ENCODE measurements at regions of chr2 and their contacts with region 1.

Region 1: DNA sequence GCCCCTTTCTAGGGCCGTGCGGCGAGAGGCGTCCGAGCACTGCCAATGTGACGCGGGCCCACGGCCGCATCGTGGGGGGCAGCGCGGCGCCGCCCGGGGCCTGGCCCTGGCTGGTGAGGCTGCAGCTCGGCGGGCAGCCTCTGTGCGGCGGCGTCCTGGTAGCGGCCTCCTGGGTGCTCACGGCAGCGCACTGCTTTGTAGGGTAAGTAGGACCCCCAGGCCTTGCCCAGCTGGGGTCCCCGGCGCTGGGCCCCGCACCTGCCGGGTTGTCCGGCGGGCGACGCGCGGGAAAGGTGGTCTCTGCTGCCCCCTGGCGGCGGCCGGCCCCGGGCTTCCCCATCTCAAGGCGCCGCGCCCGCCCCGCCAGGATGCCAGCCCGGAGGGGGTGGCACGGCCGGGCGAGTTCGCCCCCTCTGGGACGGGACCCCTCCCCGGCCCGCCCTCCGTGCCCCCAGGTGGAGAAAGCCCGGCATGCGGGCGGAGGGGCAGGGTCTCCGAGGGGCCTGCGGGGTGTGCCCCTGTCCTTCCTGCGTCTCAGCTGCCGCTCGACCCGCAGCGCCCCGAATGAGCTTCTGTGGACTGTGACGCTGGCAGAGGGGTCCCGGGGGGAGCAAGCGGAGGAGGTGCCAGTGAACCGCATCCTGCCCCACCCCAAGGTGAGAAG is 1.9 kb downstream of the PRSS56 start:
- DNase-seq: peak in 2 of 3 donors; percentile 54 to 56
- H3K4me3 ChIP-seq: peak overlapping the region in 5 of 7 experiments; percentile 10 to 54 (median 22)
- H3K27ac ChIP-seq: no peak overlapping the region
- H3K4me1 ChIP-seq: peaks cover 0 to 30% (median 18%) of the 10 kb centered on the region in 4 experiments
- H3K27me3 ChIP-seq: peaks cover 0 to 71% (median 16%) of the 10 kb centered on the region in 5 experiments

Region 2: DNA sequence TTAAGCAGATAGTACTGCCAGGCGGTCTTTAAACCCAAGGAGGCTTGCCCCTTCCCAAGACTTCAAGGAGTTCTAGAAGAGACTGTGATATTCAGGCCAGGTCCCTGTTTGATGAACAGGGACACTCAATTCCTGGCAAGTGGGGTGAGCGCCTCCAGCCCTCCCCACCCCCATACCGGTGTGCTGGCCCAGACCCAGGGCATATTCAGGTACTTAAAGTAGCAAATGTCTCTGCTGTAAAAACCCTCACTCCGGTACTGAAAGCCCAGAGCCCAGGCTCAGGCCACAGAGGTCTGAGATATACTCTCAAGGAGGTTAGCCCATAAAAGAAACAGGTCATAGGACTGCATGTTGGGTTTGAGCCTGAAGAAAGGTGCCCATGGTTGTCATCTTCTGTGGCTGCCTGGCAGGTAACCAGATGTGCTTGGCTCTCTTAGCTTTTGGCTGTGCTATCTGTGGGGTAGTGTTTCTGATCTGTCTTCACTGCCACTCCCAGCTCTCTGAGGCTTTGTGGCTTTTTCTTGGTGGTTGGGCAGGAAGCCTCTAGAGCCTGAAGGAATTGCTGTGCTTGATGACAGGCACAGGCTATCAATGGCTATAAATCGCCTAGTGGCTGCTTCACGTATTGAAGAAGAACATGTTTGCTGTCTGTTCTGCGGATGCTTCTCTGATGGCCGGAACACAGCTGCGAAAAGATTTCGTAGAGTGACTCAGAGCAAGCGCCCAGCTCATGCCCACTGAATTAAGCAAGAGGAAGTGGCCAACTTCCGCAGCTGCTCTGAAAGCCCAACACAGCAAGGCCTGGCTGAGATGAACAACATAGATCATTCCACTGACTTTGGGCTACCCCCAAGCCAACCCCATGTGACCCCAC is 206.8 kb before region 1 on chr2:
- CTCF ChIA-PET with region 1: no interaction called
- POLR2A ChIA-PET with region 1: no interaction called
- DNase-seq: peak; percentile 94 to 99 (median 98)
- H3K4me3 ChIP-seq: peak overlapping the region in 4 of 7 experiments; percentile 6 to 49 (median 33)
- H3K27ac ChIP-seq: peak overlapping the region in 1 of 2 experiments; percentile 67
- H3K4me1 ChIP-seq: peaks cover 22 to 66% (median 53%) of the 10 kb centered on the region in 4 experiments
- H3K27me3 ChIP-seq: no peaks in the 10 kb centered on the region

Region 3: GRCh38 chr2:232447638-232448303 is 74.3 kb before region 1 on chr2:
- CTCF ChIA-PET with region 1: interaction called, 29 read pairs
- POLR2A ChIA-PET with region 1: no interaction called
- DNase-seq: no peak
- H3K4me3 ChIP-seq: no peak overlapping the region
- H3K27ac ChIP-seq: no peak overlapping the region
- H3K4me1 ChIP-seq: no peaks in the 10 kb centered on the region
- H3K27me3 ChIP-seq: no peaks in the 10 kb centered on the region

Measured in common myeloid progenitor, CD34-positive (primary cell).